Activated CD4-positive, alpha-beta T cell treated with anti-CD3 and anti-CD28 coated beads, Interleukin-2, amount 10 ng/mL, durations not matched to agents 24 days and 14 days (primary cell): ENCODE measurements at regions of chr7 and their contacts with region 1.

Region 1: DNA sequence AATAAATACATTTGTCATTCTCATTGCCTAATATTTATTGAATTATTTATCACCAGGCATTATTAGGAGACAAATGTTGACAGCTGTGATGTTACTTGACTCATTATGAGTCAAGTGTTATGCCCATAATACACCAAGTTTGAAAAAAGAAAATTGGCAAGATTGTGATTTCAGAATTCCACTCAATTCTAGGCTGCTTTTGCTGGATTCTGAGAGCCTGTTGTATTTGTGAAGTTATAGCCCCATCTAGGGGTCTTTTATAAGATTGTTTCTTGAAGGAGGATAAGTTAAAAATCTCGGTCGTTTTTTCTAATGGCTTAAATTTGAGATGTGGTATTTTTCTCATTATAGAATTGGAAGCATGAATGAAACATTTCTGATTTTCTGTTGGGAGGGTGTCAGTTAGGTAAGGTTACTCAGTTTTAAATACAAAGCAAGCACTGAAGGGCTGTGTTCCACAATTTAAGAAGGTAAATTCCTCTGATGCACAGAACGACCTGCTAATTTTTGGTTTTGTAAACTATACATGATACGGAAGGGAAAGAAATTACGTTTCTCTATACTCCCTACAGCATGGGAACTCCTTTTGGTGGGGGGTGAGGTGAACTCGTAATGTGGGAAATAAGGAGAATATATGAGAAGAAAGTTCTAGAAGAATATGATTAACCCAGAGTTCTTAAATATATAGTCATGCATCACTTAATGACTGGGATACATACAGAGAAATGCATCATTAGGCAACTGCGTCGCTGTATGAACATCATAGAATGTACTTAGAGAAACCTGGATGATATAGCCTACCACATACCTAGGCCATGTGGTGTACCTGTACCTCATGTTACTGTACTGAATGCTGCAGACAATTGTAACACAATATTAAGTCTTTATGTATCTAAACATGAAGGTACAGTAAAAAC is 2.6 kb downstream of the STK31 start:
- DNase-seq: no peak
- H3K4me3 Mint-ChIP-seq: no peak overlapping the region
- H3K27ac Mint-ChIP-seq: no peak overlapping the region
- H3K4me1 Mint-ChIP-seq: no peaks in the 10 kb centered on the region
- H3K27me3 Mint-ChIP-seq: peaks cover 3% of the 10 kb centered on the region

Region 2: GRCh38 chr7:23454881-23455506 is 257.6 kb before region 1 on chr7:
- intact Hi-C with region 1: no loop called
- DNase-seq: no peak
- H3K4me3 Mint-ChIP-seq: no peak overlapping the region
- H3K27ac Mint-ChIP-seq: no peak overlapping the region
- H3K4me1 Mint-ChIP-seq: peaks cover 3% of the 10 kb centered on the region
- H3K27me3 Mint-ChIP-seq: peaks cover 40% of the 10 kb centered on the region

Region 3: DNA sequence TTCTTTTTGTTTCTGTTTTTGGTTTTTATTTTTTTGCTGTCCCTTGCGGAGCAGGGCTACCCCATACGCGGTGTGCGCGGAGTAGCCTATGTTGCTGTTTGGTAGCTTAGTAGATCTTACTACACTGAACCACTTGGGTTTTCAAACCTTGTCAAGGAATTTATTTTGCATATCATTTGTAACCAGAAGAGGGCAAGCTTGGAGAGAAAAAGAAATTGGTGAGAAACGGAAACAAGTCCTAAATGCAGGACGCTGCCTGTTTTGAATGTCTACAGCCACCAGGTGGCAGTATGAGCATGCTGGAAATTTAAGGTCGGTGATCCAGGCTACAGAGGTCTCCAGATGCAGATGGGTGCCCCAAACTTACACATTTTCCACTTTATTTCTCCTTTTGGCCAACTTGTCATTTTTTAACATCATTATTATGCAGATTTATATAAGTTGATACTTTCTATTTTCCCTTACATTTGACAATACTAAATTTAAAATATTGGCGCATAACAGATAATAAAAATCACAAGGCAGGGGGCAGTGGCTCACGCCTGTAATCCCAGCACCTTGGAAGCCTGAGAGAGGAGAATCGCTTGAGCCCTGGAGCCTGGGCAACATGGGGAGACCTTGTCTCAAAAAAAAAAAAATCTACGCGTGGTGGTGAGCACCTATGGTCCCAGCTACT is 165.6 kb before region 1 on chr7:
- intact Hi-C with region 1: loop called (anchors 1 kb)
- DNase-seq: peak; percentile 93
- H3K4me3 Mint-ChIP-seq: no peak overlapping the region
- H3K27ac Mint-ChIP-seq: no peak overlapping the region
- H3K4me1 Mint-ChIP-seq: peaks cover 7% of the 10 kb centered on the region
- H3K27me3 Mint-ChIP-seq: peaks cover 5% of the 10 kb centered on the region

Region 4: DNA sequence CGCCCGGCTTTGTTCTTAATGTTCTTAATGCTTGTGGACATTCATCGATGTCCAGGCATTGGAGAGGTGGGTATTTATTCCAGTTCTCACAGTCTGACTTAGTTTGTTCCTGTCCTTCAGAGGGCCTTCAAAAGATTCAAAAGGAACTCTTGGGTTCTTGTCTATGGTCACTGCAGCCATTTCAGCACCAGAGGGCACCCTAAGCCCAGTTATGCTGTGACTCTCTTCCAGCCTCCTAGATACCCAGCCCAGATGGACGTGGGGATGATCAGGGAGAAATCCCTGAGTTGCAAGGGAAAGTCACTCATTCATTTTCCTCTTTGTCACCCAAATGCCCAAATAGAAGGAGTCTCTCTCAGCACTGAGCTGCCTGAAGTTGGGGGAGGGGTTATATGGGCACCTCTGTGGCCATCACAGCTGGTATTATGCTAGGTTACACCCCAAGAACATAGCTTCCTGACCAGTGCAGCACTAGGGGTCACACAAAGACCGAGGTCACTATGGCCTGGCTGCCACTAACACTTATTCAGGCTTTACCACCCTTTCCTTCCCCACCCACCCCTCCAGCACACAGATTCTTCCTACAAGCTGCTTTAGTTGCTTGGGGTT is 141.9 kb before region 1 on chr7:
- intact Hi-C with region 1: loop called (anchors 1 kb)
- DNase-seq: peak; percentile 90
- H3K4me3 Mint-ChIP-seq: no peak overlapping the region
- H3K27ac Mint-ChIP-seq: no peak overlapping the region
- H3K4me1 Mint-ChIP-seq: no peaks in the 10 kb centered on the region
- H3K27me3 Mint-ChIP-seq: peaks cover 8% of the 10 kb centered on the region